SK-N-SH (cell line): ENCODE measurements at regions of chr1 and their contacts with region 1.

Region 1: GRCh38 chr1:151059078-151059907 is at the start of gene CDC42SE1:
- DNase-seq: peak; percentile 93
- H3K4me3 ChIP-seq: peak within 1 kb of the TSS; percentile 79 to 81
- H3K27ac ChIP-seq: peak within 1 kb of the TSS; percentile 99
- H3K4me1 ChIP-seq: peaks cover 11 to 28% of the 10 kb centered on the region in 2 experiments; a peak in 3 of 4 replicates
- H3K27me3 ChIP-seq: no peaks in the 10 kb centered on the region
- CTCF ChIP-seq: peak; percentile 68
- EP300 ChIP-seq: no peak; a peak in 1 of 4 replicates
- RAD21 ChIP-seq: no peak; the same call in 1 of the 2 replicates
- polyA plus RNA-seq, gene CDC42SE1: 47.8 and 65.6 TPM in 2 replicates

Region 2: DNA sequence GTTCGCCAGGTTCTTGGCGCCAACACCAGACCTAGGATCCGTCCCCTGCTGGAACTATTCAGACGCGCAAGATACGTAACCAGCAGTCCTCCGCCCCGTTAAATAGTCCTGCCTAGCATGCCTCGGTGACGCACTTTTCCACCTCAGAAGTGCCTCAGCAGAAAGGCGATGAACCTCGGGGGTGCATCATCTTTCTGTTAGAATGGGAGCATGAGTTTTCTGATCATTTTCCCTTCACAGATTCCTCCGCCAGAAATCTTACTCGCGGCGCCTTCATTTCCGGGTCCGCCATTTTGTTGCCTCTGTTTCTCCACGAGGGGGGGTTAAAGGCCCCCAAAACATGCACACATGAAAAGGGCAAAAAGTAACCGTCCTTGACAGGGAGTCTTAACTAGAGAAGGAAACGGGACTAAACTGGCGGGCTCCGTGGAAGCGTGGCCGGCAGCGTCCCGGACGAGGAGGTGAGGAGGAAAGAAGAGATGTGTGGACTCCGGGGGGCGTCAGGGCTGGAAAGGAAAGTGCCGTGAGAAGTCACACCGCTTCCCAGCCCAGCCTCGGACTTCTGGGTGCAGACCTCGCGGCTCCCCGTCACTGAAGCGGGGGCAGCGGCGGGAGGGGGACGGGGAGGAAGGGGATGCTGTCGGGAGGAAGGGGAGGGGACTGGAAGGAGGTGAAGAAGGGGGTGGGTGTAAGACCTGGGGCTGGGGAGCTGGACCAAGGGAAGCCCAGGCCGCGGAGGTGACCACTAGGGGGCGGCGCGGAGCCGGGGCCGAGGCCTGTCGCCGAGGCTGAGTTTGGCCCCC is 11.4 kb after region 1 on chr1 and contains the start of gene GABPB2:
- CTCF ChIA-PET with region 1: interaction called, 32 read pairs
- POLR2A ChIA-PET with region 1: interaction called, 5 read pairs
- DNase-seq: peak; percentile 89
- H3K4me3 ChIP-seq: peak within 1 kb of the TSS; percentile 50 to 57
- H3K27ac ChIP-seq: peak within 1 kb of the TSS; percentile 91 to 95
- H3K4me1 ChIP-seq: no peaks in the 10 kb centered on the region; a peak in 1 of 4 replicates
- H3K27me3 ChIP-seq: no peaks in the 10 kb centered on the region
- CTCF ChIP-seq: peak; percentile 73
- EP300 ChIP-seq: no peak
- RAD21 ChIP-seq: peak; percentile 35
- polyA plus RNA-seq, gene GABPB2: 2.4 and 3.9 TPM in 2 replicates

Region 3: GRCh38 chr1:151106894-151107293 is 47.6 kb after region 1 on chr1:
- CTCF ChIA-PET with region 1: no interaction called
- POLR2A ChIA-PET with region 1: no interaction called
- DNase-seq: no peak
- H3K4me3 ChIP-seq: no peak overlapping the region
- H3K27ac ChIP-seq: peak overlapping the region in 1 of 2 experiments; percentile 48; a peak in 2 of 4 replicates
- H3K4me1 ChIP-seq: peaks cover 0 to 7% of the 10 kb centered on the region in 2 experiments; a peak in 2 of 4 replicates
- H3K27me3 ChIP-seq: no peaks in the 10 kb centered on the region
- CTCF ChIP-seq: no peak
- EP300 ChIP-seq: no peak
- RAD21 ChIP-seq: no peak